Endothelial cell of umbilical vein (primary cell): ENCODE measurements at regions of chr16 and their contacts with region 1.

Region 1: GRCh38 chr16:85420501-85421337 is 192.4 kb upstream of the GSE1 start:
- DNase-seq: peak; percentile 30
- H3K4me3 ChIP-seq: no peak overlapping the region
- H3K27ac ChIP-seq: no peak overlapping the region
- H3K4me1 ChIP-seq: no peaks in the 10 kb centered on the region
- H3K27me3 ChIP-seq: no peaks in the 10 kb centered on the region
- CTCF ChIP-seq: peak; percentile 96 to 100
- POLR2A ChIP-seq: no peak

Region 2: DNA sequence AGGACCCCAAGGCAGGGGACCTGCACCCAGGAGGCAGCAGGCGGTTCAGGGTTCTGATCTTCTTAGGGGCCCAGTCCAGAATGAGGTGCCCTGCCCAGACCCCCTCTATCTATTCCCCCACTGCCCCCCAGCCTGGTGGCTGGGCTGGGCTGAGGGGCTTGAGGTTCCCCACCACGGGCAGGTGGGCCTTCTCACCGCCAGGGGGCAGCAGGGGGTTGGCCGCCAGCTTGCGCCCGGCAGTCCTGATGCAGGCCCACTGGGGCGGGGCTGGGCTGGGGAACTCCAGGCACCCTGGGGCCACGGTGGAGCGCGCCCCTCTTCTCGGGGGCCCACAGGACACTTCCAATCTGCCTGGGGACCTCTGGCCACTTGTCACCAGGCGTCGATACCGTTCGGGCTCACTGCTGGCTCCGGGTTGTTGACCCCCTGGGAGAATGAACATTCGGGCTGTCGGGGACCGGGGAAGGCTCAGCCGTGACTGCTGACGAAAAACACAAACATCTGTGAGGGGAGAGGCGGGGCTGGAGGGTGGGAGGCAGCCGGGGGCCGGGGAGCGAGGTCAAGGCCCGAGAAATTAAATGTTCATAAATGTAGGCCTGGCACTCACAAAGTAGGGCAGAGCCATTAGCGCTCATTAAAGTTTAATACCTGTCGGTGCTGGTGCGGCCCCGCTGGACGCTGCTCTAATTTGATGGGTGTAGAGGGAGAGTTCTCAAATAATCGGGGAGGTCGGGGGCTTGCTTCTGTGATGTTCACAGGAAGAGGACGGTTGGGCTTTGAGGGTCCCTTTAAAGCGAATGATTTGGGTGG is 26.8 kb before region 1 on chr16:
- CTCF ChIA-PET with region 1: interaction called, 15 read pairs
- POLR2A ChIA-PET with region 1: no interaction called
- dilution Hi-C with region 1: no loop called
- intact Hi-C with region 1: no loop called
- DNase-seq: no peak
- H3K4me3 ChIP-seq: no peak overlapping the region
- H3K27ac ChIP-seq: no peak overlapping the region
- H3K4me1 ChIP-seq: peaks cover 12% of the 10 kb centered on the region
- H3K27me3 ChIP-seq: no peaks in the 10 kb centered on the region
- CTCF ChIP-seq: peak; percentile 74 to 92
- POLR2A ChIP-seq: no peak

Region 3: GRCh38 chr16:85402910-85403692 is 17.6 kb before region 1 on chr16:
- CTCF ChIA-PET with region 1: interaction called, 13 read pairs
- POLR2A ChIA-PET with region 1: interaction called, 5 read pairs
- dilution Hi-C with region 1: no loop called
- intact Hi-C with region 1: no loop called
- DNase-seq: peak; percentile 71
- H3K4me3 ChIP-seq: no peak overlapping the region
- H3K27ac ChIP-seq: no peak overlapping the region
- H3K4me1 ChIP-seq: no peaks in the 10 kb centered on the region
- H3K27me3 ChIP-seq: no peaks in the 10 kb centered on the region
- CTCF ChIP-seq: no peak
- POLR2A ChIP-seq: no peak

Region 4: DNA sequence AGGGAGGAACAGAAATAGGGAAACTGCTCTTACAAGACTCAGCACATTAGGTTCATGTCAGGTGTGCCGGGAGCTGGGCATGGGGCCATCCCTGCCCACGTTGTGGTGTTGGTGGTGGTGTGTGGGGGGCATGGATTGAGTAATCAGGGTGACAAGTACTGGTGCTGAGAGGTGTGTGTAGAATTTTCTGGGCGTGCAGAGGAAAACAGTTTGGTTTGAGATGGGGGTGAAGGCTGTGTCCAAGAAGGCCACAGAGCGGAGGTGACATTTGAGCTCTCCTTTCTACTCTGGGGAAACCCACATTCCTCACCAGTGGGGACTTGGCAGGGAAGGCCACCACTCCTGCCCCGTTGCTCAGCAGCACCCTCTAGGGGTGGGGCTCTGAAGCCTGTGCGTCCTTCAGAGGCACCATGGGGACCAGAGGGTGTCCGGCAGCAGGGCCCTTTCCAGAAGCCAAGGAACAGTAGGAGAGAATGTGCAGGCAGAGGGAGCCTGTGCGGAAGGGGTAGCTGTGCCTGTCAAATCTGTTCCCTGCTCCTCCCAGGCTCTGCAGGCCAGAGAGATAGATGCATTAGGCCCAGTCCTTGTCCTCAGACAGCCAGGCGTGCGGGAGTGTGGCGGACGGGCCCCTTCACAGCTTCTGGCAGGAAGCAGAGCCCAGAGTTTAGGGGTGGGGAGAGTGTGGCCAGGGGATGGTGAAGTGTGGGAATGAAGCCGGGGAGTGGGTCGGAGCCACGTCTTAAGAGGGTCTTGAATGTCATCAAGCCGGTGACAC is 143.7 kb after region 1 on chr16:
- CTCF ChIA-PET with region 1: interaction called, 20 read pairs
- POLR2A ChIA-PET with region 1: no interaction called
- dilution Hi-C with region 1: no loop called
- intact Hi-C with region 1: loop called (anchors 1 kb)
- DNase-seq: no peak
- H3K4me3 ChIP-seq: no peak overlapping the region
- H3K27ac ChIP-seq: no peak overlapping the region
- H3K4me1 ChIP-seq: peaks cover 14% of the 10 kb centered on the region
- H3K27me3 ChIP-seq: no peaks in the 10 kb centered on the region
- CTCF ChIP-seq: peak; percentile 47 to 48
- POLR2A ChIP-seq: no peak

Region 5: DNA sequence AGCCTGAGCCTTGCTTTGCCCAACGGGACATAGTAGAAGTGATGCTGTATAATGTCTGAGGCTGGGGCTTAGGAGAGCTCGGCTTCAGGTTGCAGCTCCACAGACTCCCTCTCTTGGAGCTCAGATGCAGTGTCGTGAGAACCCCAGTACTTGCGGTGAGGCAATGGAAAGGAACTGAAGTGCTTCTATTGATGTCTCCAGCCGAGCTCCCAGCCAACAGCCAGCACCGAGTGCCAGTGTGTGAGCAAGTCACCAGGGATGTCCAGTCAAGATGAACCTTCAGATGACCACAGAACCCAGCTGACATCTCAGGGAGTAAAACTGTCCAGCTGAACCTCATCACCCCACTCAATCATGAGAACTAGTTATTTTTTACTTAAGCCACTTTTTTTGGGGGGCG is 746.3 kb after region 1 on chr16:
- CTCF ChIA-PET with region 1: no interaction called
- POLR2A ChIA-PET with region 1: no interaction called
- dilution Hi-C with region 1: no loop called
- intact Hi-C with region 1: loop called (anchors 5 kb)
- DNase-seq: no peak
- H3K4me3 ChIP-seq: no peak overlapping the region
- H3K27ac ChIP-seq: no peak overlapping the region
- H3K4me1 ChIP-seq: no peaks in the 10 kb centered on the region
- H3K27me3 ChIP-seq: no peaks in the 10 kb centered on the region
- CTCF ChIP-seq: no peak
- POLR2A ChIP-seq: no peak